Gastrocnemius medialis (tissue), 4 donors: ENCODE measurements at regions of chr7 and their contacts with region 1.

Region 1: GRCh38 chr7:44797329-44798251 is 1.1 kb downstream of the PPIA start:
- DNase-seq: peak; percentile 81 to 86
- ATAC-seq: peak; percentile 75 to 76
- H3K4me3 ChIP-seq: peak overlapping the region; percentile 72 to 79 (median 75)
- H3K27ac ChIP-seq: peak overlapping the region; percentile 89 to 97 (median 96)
- H3K4me1 ChIP-seq: peaks cover 16 to 23% of the 10 kb centered on the region in 2 donors
- H3K27me3 ChIP-seq: no peaks in the 10 kb centered on the region
- CTCF ChIP-seq: peak in 2 of 5 experiments; percentile 29 to 52
- POLR2A ChIP-seq: peak in 1 of 2 donors; percentile 27

Region 2: DNA sequence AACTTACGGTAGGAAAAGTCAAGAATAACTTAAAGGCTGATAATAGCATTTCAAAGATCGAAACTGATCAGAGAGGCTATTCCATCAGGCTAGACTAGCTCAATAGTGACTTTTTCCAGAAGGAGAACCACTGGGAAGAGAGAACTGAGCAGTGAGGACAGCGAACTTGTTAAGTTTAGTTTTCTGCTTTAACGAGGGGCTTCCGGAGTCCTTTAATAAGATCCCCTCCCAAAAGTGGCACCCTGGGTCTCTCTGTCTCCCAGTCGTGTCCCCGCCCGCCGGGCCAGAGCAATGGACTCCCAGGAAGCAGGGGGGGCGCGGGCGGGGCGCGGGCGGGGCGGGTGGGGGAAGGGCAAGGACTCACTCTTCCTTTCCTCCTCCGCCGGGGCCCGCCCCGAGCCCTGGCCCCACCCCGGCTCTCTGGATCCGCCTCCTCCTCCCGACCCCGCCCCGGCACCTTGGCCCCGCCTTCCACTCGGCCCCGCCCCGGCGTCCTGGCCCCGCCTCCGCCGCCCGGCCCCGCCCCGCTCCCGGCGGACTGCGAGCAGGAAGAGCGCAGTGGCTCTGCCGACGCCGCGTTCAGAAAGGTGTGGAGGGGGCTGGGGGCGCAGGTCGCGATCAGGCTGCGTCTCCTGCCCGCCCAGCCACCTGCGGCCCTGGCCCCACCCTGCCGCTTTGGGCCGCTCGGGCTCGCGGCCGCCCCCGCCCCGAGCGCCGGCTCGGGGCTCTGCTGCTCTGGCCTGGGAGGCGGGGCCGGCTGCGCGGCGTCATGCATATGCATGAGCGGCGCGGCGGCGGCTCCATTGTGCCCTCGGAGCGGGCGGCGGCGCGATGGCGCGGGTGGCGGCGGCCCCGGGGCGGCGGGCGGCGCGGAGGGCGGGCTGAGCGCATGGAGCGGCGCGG is 49.3 kb before region 1 on chr7 and contains the start of gene ZMIZ2:
- in situ Hi-C with region 1: no loop called
- intact Hi-C with region 1: loop called (anchors 1 kb)
- DNase-seq: peak; percentile 90 to 91
- ATAC-seq: peak; percentile 86 to 88
- H3K4me3 ChIP-seq: peak within 1 kb of the TSS; percentile 72 to 84 (median 78)
- H3K27ac ChIP-seq: peak within 1 kb of the TSS; percentile 89 to 97 (median 94)
- H3K4me1 ChIP-seq: peaks cover 21 to 28% of the 10 kb centered on the region in 2 donors
- H3K27me3 ChIP-seq: no peaks in the 10 kb centered on the region
- CTCF ChIP-seq: no peak
- POLR2A ChIP-seq: peak; percentile 83 to 84
- total RNA-seq, gene ZMIZ2: 10.7 to 19.8 (median 14.0) TPM